Activated T-helper 1 cell treated with anti-CD3 and anti-CD28 coated beads, Interleukin-12 subunit alpha, Interleukin-12 subunit beta, Interleukin-2, Interleukin-4 antibody, amounts not matched to agents 30 ng/mL and 10 ng/mL and 1 ng/mL, durations not matched to agents 14 hours and 24 hours and 36 hours (primary cell): ENCODE measurements at regions of chr12 and their contacts with region 1.

Region 1: DNA sequence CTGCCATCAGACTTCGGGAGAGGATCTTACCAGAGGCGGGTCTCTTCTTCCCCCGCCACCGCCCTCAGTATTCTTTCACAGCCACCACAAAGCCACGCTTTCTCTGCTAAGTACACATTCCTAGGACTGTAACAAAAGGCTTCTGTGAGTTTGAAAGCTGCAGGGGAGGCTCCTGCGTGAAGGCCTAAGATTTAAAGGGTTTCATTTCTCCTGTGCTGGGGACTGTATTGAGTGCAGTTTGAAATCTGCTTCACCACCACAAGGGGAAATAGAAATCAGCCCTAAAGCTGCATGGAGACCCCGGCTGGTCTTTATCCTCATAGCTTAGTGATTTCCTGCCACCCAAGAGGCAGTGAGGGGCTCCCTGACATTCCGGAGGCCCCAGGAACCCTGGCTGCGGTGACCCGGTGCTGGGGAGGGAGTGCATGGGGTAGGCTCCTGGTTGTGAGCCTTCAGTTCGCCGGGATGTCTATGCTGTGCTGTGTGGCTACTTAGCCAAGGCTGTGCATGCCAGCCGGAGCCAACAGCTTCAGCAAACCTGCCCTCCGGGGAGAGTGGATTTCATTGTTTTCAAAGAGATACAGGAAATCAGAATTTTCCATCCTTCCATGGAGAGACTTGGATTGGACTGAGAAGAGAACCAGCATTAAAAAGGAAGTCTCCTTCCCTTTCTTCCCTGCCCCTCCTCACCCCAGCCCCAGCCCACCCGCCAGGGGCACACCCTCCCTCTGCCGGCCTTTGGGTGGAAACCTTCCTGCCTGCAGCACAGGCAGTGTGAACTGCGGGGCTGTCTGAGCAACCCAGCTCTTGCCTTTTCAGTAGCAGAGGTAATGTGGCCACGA is 163.3 kb downstream of the ETV6 start:
- DNase-seq: no peak
- H3K4me3 Mint-ChIP-seq: peak overlapping the region; percentile 69
- H3K27ac Mint-ChIP-seq: peak overlapping the region; percentile 91
- H3K4me1 Mint-ChIP-seq: peaks cover 87% of the 10 kb centered on the region
- H3K27me3 Mint-ChIP-seq: no peaks in the 10 kb centered on the region

Region 2: GRCh38 chr12:11661491-11662089 is 151.2 kb before region 1 on chr12:
- intact Hi-C with region 1: no loop called
- DNase-seq: no peak
- H3K4me3 Mint-ChIP-seq: no peak overlapping the region
- H3K27ac Mint-ChIP-seq: peak overlapping the region; percentile 46
- H3K4me1 Mint-ChIP-seq: peaks cover 87% of the 10 kb centered on the region
- H3K27me3 Mint-ChIP-seq: no peaks in the 10 kb centered on the region

Region 3: DNA sequence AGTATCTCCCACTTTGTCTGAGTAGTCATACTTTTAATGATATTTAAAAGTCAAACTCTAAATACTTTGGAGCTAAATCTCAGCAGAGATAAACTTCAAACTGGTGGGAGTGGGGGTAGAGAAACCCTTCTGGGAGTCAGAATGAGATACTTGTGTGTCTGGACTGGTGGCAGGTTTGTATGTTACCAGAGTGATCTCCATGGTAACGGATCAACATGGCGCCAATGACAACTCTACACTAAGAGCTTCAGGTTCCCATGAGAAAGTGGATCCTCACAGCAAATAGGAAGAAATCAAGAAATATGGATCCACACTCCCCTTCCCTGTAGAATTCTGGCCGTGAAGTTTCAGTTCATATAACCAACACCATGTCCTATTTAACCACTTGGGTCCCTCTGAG is 41.5 kb before region 1 on chr12:
- intact Hi-C with region 1: loop called (anchors 1 kb)
- DNase-seq: no peak
- H3K4me3 Mint-ChIP-seq: no peak overlapping the region
- H3K27ac Mint-ChIP-seq: peak overlapping the region; percentile 98
- H3K4me1 Mint-ChIP-seq: peaks cover 96% of the 10 kb centered on the region
- H3K27me3 Mint-ChIP-seq: no peaks in the 10 kb centered on the region

Region 4: GRCh38 chr12:11780521-11781101 is 32.2 kb before region 1 on chr12:
- intact Hi-C with region 1: loop called (anchors 2 kb)
- DNase-seq: no peak
- H3K4me3 Mint-ChIP-seq: no peak overlapping the region
- H3K27ac Mint-ChIP-seq: peak overlapping the region; percentile 90
- H3K4me1 Mint-ChIP-seq: peaks cover 85% of the 10 kb centered on the region
- H3K27me3 Mint-ChIP-seq: no peaks in the 10 kb centered on the region

Region 5: DNA sequence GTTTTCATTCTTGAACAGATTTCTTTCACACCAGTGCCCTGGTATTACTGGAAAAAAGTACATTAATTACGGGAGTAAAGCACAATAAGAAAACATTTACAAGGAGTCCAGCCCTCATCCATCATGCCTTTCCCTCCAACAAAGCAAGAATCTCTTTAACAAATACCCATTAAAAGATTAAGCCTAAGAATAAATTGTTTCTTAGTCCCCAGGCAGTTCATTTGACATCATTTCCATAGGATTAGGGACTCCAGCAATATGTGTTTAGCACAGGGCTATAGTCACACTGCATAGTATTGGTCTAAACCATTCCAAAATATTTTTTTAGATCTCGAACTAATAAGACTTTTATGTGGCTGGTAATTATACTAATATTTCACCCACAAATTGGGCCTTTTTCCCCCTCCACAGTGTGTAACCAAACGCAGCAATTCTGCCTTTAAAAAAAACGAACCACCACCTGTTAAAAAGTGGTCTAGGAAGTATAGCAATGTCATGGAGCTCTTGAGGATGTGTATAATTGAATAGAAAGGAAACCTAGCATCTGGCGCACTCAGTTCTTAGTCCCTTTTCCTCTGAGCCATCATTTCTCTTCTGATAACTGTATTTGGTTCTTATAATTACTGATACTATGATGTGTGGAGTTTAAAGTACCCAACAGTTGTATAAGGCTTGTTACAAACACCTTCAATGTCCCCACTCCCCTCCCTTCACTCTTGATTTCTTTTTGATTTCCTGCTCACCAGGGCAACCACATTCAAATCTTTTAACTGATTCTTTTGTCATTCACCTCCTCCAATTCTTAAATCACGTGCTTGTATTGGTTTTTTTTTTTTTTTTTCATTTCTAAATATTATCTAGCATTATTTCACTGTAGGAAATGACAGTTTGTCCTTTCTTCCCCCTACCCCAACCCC is 24.6 kb before region 1 on chr12:
- intact Hi-C with region 1: loop called (anchors 2 kb)
- DNase-seq: no peak
- H3K4me3 Mint-ChIP-seq: no peak overlapping the region
- H3K27ac Mint-ChIP-seq: no peak overlapping the region
- H3K4me1 Mint-ChIP-seq: peaks cover 61% of the 10 kb centered on the region
- H3K27me3 Mint-ChIP-seq: no peaks in the 10 kb centered on the region

Region 6: GRCh38 chr12:11798856-11799501 is 13.8 kb before region 1 on chr12:
- intact Hi-C with region 1: loop called (anchors 2 kb)
- DNase-seq: no peak
- H3K4me3 Mint-ChIP-seq: peak overlapping the region; percentile 24
- H3K27ac Mint-ChIP-seq: peak overlapping the region; percentile 78
- H3K4me1 Mint-ChIP-seq: peaks cover 73% of the 10 kb centered on the region
- H3K27me3 Mint-ChIP-seq: no peaks in the 10 kb centered on the region